Spleen (tissue), 13 donors: ENCODE measurements at regions of chr4 and their contacts with region 1.

Region 1: GRCh38 chr4:139115226-139115625 is 61.8 kb downstream of the ELF2 start:
- DNase-seq: peak; percentile 34
- H3K4me3 ChIP-seq: no peak overlapping the region
- H3K27ac ChIP-seq: no peak overlapping the region
- H3K4me1 ChIP-seq: no peaks in the 10 kb centered on the region
- H3K27me3 ChIP-seq: no peaks in the 10 kb centered on the region
- CTCF ChIP-seq: no peak
- POLR2A ChIP-seq: no peak

Region 2: DNA sequence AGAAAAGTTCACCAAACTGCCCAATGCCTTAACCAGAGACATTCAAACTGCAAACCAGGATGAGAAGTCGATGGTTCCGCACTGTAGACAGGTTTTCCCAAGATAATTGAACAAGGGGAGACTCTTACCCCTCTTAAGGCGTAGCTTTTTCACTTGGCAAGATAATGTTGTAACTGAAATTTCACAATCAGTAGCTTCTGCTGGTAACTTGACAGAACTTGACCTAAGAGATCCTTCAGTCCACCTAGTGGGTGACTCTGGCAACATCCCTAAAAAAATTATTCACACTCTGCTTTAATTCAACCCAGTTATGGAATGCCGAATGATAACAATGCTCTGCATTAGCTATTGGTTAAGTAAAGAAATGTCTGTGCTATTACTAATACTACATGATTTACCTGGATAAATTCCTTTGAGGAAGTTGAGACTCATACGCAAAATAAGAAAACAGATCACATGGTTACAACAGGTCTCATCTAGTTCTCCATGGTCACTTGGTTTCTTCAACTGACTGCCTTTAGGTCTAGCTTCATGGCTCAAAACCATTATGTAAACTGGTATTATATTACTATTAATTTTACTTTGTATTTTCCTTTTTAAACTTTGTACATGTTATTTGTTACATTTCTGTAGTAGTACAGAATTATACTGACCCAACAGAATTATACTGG is 52.7 kb after region 1 on chr4:
- intact Hi-C with region 1: loop called (anchors 10 kb)
- DNase-seq: no peak
- H3K4me3 ChIP-seq: no peak overlapping the region
- H3K27ac ChIP-seq: peak overlapping the region in 6 of 8 donors; percentile 2 to 79 (median 59)
- H3K4me1 ChIP-seq: peaks cover 0 to 84% (median 42%) of the 10 kb centered on the region in 6 donors
- H3K27me3 ChIP-seq: no peaks in the 10 kb centered on the region
- CTCF ChIP-seq: peak in 9 of 11 experiments; percentile 20 to 64 (median 38)
- POLR2A ChIP-seq: no peak

Region 3: GRCh38 chr4:140268186-140268841 is 1153.1 kb after region 1 on chr4:
- intact Hi-C with region 1: no loop called
- DNase-seq: no peak
- H3K4me3 ChIP-seq: no peak overlapping the region
- H3K27ac ChIP-seq: no peak overlapping the region
- H3K4me1 ChIP-seq: no peaks in the 10 kb centered on the region
- H3K27me3 ChIP-seq: peaks cover 0 to 5% (median 0%) of the 10 kb centered on the region in 7 donors
- CTCF ChIP-seq: no peak
- POLR2A ChIP-seq: no peak